Activated CD4-positive, alpha-beta memory T cell treated with anti-CD3 and anti-CD28 coated beads for 36 hours (primary cell): ENCODE measurements at regions of chr6 and their contacts with region 1.

Region 1: DNA sequence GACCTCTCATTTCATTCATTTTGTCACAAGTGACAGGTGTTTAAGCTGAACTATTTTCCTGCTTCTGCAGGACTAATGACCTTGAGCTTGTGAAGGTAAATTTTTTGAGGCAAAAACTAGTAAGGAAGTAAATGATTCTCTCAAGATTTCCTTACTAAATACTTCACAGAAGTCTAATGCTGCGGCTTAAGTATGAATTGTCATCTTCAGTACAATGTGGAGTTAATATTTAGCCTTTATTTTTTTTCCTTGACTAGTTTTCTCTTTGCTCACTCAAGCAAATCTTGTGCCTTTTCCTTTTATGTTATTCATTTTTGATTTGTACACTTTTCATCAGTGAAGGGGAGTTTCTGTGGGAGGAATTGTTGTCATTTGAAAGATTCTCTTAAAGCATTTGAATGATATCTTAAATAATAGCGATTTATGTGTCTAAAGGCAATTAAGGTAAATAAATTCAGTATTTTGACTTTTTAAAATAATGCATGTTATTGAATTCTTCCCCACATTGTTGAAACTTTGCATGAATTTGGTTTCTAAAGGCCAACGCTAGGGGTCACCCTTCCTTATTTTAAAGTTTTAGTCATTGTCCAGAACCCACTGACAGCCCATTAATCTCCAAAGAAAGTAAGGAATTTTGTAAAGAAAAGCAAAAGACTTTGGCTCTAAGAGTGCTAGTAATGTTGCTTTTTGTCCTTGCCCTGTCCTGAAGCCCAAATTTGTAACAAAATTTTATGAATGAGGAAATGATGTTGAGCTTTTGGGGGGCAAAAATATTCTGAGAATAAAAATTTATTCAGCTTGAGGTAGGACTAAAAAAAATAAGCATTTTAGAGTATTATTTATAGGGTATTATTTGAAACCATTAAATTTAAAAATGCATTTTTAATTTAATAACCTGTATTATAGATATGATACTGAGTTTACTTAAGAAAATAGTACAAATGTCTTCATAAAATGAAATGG is 157.4 kb upstream of the LAMA2 start:
- DNase-seq: no peak
- H3K4me3 Mint-ChIP-seq: no peak overlapping the region
- H3K27ac Mint-ChIP-seq: no peak overlapping the region
- H3K4me1 Mint-ChIP-seq: no peaks in the 10 kb centered on the region
- H3K27me3 Mint-ChIP-seq: peaks cover 15% of the 10 kb centered on the region

Region 2: DNA sequence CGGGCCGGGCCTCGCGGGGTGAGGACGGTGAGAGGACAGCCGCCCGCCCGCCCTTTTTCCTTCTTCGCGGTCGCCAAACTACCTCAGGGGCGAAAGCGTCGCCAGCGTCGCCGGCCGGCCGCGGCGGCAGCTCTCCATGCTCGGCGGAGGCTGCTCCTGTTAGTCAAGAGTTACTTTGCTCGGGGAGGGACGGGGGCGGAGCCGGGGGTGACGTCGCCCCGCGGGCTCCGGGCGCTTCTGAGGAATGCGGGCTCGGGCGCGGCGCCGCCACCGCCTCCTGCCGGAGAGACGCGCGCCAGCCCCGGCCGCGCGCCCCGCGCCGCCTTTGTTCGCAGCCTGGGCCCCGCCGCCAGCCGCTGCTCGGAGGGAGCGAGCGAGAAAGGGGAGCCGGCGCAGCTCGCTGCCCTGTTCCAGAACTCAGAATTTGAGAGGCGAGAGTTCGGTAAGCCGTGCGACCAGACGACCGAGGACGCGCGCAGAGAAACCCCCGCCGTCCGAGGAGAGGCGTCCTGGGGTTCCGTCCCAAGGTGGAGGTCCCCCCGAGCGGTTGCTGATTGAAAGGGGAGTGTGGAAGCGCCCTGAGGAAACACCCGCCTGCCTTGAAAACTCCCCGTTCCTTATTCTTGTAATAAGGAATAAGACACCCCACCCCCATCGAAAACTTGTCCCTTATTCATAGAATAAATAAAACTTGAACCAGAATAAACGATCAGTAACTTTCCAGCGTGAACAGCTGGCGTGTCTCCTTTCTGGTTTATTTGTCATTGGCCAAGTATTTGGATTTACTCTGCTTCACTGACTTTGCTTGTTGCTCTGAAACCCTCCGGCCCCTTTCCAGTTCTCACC is 204.9 kb before region 1 on chr6 and contains the start of gene PTPRK:
- CTCF ChIA-PET with region 1: interaction called, 5 read pairs
- POLR2A ChIA-PET with region 1: no interaction called
- intact Hi-C with region 1: loop called (anchors 10 kb)
- DNase-seq: peak; percentile 92
- H3K4me3 Mint-ChIP-seq: peak within 1 kb of the TSS; percentile 85
- H3K27ac Mint-ChIP-seq: peak within 1 kb of the TSS; percentile 23
- H3K4me1 Mint-ChIP-seq: peaks cover 9% of the 10 kb centered on the region
- H3K27me3 Mint-ChIP-seq: peaks cover 55% of the 10 kb centered on the region
- total RNA-seq, gene PTPRK: 1.8 to 2.2 TPM

Region 3: DNA sequence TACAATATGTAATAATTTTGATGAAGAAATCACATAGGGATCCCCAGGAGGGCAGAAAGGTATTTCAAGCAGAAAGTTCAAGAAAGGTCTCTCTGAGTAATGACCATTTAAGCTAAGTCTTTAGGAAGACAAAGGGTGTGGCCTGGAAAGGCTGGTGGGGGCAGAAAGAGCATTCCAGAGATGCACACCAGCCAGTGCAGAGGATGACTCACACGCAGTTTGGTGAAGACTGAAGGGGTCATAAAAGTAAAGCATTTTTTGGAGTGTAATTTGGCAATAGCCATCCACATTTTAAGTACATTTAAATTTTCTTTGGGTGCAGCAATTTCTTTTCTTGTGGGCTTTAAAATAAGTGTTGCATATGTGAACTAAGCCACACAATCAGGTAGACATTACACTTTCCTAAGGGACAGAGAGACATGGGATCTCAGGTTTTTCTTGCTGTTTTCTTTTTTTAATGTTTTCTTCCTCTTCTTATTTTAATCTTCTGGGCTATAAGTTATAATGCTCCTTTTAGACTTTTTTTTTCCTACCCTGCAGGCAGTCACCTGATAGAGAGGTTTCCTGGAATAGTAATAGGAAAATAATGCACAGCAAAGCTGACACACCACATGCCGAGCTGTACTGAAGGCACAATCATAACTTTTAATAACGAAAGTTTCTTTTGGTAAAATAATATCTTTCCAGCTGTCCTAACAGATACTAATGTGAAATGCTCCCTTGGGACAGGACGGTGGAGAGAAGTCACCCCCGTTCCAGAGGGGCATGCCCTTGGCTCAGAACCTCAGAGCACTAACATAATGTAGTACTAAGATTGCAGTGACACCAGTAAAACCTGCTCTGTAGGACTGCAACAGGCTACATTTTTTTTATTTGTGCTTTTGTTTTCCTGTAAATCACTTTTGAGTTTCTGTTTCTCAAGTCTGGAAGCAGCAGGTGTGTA is 155.5 kb before region 1 on chr6:
- CTCF ChIA-PET with region 1: no interaction called
- POLR2A ChIA-PET with region 1: no interaction called
- intact Hi-C with region 1: no loop called
- DNase-seq: no peak
- H3K4me3 Mint-ChIP-seq: no peak overlapping the region
- H3K27ac Mint-ChIP-seq: no peak overlapping the region
- H3K4me1 Mint-ChIP-seq: no peaks in the 10 kb centered on the region
- H3K27me3 Mint-ChIP-seq: no peaks in the 10 kb centered on the region

Region 4: DNA sequence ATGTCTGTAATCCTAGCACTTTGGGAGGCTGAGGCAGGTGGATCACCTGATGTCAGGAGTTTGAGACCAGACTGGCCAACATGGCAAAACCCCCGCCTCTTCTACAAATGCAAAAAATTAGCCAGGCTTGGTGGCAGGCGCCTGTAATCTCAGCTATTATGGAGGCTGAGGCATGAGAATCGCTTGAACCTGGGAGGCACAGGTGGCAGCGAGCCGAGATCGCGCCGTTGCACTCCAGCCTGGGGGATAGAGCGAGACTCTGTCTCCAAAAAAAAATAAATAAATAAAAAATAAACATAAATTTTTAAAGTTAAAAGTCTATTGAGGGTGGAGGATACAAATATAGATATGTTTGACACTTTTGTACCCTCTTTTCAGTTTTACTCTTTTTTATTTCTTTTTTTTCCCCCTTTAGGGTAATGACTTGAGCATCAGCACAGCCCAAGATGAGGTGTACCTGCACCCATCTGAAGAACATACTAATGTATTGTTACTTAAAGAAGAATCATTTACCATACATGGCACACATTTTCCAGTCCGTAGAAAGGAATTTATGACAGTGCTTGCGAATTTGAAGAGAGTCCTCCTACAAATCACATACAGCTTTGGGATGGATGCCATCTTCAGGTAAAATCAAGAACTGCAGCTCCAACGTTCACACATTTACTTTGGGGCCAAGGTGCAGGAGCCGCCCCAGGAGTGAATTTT is 526.3 kb after region 1 on chr6:
- CTCF ChIA-PET with region 1: interaction called, 14 read pairs
- POLR2A ChIA-PET with region 1: no interaction called
- intact Hi-C with region 1: loop called (anchors 1 kb)
- DNase-seq: peak; percentile 61
- H3K4me3 Mint-ChIP-seq: no peak overlapping the region
- H3K27ac Mint-ChIP-seq: no peak overlapping the region
- H3K4me1 Mint-ChIP-seq: peaks cover 17% of the 10 kb centered on the region
- H3K27me3 Mint-ChIP-seq: peaks cover 17% of the 10 kb centered on the region

Region 5: DNA sequence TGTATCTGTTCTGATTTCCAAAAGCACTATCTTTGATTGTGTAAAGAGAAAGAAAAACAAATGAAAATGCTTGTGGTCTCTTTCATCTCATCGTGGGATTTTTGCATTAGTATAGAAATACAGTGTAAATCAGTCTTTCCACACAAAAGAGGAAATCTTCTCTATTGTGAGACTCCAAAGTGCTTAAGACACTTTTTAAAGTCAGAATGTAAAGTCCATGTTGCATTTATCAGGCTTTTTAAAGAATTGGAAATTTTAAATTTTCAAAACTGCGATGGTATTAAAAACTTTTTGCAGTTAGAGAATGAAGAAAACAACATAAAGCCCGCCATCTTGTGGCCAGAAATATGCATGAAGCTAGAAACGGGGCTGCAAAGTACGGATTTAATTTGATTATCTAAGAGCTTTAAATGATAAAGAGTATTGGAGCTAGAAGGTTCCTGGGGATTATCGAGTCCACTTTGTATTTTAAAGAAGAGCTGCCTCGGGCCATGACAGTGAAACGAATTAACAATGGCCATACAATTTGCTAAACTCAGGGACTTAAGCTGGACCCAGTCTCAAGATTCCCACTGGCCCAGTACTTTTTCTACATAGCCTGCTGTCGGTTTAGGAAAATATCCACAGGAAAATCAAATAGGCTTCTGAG is 644.8 kb after region 1 on chr6:
- CTCF ChIA-PET with region 1: interaction called, 11 read pairs
- POLR2A ChIA-PET with region 1: no interaction called
- intact Hi-C with region 1: loop called (anchors 5 kb)
- DNase-seq: peak; percentile 56
- H3K4me3 Mint-ChIP-seq: no peak overlapping the region
- H3K27ac Mint-ChIP-seq: no peak overlapping the region
- H3K4me1 Mint-ChIP-seq: peaks cover 19% of the 10 kb centered on the region
- H3K27me3 Mint-ChIP-seq: no peaks in the 10 kb centered on the region